OCI-LY7 (cell line): ENCODE measurements at regions of chr13 and their contacts with region 1.

Region 1: GRCh38 chr13:35139591-35139990 is 197.5 kb downstream of the NBEA start:
- DNase-seq: no peak
- H3K4me3 ChIP-seq: no peak overlapping the region
- H3K27ac ChIP-seq: no peak overlapping the region
- H3K4me1 ChIP-seq: peaks cover 7% of the 10 kb centered on the region
- CTCF ChIP-seq: no peak

Region 2: GRCh38 chr13:33684874-33685273 is 1454.7 kb before region 1 on chr13:
- CTCF ChIA-PET with region 1: no interaction called
- POLR2A ChIA-PET with region 1: interaction called, 10 read pairs
- intact Hi-C with region 1: no loop called
- DNase-seq: no peak
- H3K4me3 ChIP-seq: no peak overlapping the region
- H3K27ac ChIP-seq: no peak overlapping the region
- H3K4me1 ChIP-seq: no peaks in the 10 kb centered on the region
- CTCF ChIP-seq: no peak

Region 3: DNA sequence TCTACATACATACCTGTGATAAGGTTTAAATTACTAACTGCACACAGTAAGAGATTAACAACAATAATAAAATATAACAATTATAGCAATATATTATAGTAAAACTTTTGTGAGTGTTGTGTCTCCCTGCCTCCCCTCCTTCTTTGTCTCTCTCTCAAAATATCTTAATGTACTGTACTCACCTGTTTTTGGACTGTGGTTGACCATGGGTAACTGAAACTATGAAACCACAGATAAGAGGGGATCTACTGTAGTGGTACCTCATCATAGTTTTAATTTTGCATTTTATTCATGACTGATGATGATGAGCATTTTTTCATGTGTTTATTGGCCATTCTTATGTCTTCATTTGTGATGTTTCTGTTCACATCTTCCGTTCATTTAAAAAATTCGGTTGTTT is 93.0 kb before region 1 on chr13:
- CTCF ChIA-PET with region 1: no interaction called
- POLR2A ChIA-PET with region 1: no interaction called
- intact Hi-C with region 1: no loop called
- DNase-seq: no peak
- H3K4me3 ChIP-seq: no peak overlapping the region
- H3K27ac ChIP-seq: no peak overlapping the region
- H3K4me1 ChIP-seq: no peaks in the 10 kb centered on the region
- CTCF ChIP-seq: no peak